ENCODE measurements at regions of chr15 and their contacts with region 1.

Region 1: GRCh38 chr15:33860754-33861153 is 107.5 kb upstream of the CHRM5 start:
- DNase-seq: peak; percentile 82
- ATAC-seq: peak; percentile 98
- H3K4me3 ChIP-seq: no peak overlapping the region
- H3K27ac ChIP-seq: no peak overlapping the region
- H3K4me1 ChIP-seq: peaks cover 19% of the 10 kb centered on the region
- H3K27me3 ChIP-seq: no peaks in the 10 kb centered on the region
- CTCF ChIP-seq: no peak

Region 2: DNA sequence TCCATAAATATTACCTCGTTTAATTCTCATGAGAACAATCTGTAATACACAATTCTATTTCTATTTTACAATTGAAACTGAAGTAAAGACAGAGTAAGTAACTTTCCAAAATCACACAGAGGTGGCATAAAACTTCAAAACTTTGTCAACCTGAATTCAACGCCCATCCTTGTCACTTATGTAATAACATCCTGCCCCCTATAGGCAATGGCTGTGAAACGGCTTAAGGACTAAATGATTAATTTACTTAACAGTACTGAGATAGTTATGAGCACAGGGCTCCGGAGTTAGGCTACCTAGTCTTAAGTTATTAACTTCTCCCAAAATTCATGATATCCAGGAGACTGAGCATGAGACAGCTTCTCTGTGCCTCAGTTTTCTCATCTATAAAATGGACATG is 185.5 kb before region 1 on chr15:
- CTCF ChIA-PET with region 1: no interaction called
- POLR2A ChIA-PET with region 1: no interaction called
- intact Hi-C with region 1: no loop called
- DNase-seq: peak; percentile 68
- ATAC-seq: peak; percentile 56
- H3K4me3 ChIP-seq: no peak overlapping the region
- H3K27ac ChIP-seq: no peak overlapping the region
- H3K4me1 ChIP-seq: no peaks in the 10 kb centered on the region
- H3K27me3 ChIP-seq: peaks cover 86% of the 10 kb centered on the region
- CTCF ChIP-seq: peak; percentile 82

Region 3: GRCh38 chr15:33701305-33701698 is 159.5 kb before region 1 on chr15:
- CTCF ChIA-PET with region 1: no interaction called
- POLR2A ChIA-PET with region 1: no interaction called
- intact Hi-C with region 1: no loop called
- DNase-seq: peak; percentile 26
- ATAC-seq: peak; percentile 60
- H3K4me3 ChIP-seq: no peak overlapping the region
- H3K27ac ChIP-seq: no peak overlapping the region
- H3K4me1 ChIP-seq: no peaks in the 10 kb centered on the region
- H3K27me3 ChIP-seq: peaks cover 26% of the 10 kb centered on the region
- CTCF ChIP-seq: no peak; the same call in 1 of the 2 replicates

Region 4: GRCh38 chr15:33908406-33908805 is 47.7 kb after region 1 on chr15:
- CTCF ChIA-PET with region 1: no interaction called
- POLR2A ChIA-PET with region 1: no interaction called
- intact Hi-C with region 1: loop called (anchors 5 kb)
- DNase-seq: no peak
- ATAC-seq: no peak
- H3K4me3 ChIP-seq: no peak overlapping the region
- H3K27ac ChIP-seq: no peak overlapping the region
- H3K4me1 ChIP-seq: peaks cover 33% of the 10 kb centered on the region
- H3K27me3 ChIP-seq: no peaks in the 10 kb centered on the region
- CTCF ChIP-seq: no peak

Region 5: DNA sequence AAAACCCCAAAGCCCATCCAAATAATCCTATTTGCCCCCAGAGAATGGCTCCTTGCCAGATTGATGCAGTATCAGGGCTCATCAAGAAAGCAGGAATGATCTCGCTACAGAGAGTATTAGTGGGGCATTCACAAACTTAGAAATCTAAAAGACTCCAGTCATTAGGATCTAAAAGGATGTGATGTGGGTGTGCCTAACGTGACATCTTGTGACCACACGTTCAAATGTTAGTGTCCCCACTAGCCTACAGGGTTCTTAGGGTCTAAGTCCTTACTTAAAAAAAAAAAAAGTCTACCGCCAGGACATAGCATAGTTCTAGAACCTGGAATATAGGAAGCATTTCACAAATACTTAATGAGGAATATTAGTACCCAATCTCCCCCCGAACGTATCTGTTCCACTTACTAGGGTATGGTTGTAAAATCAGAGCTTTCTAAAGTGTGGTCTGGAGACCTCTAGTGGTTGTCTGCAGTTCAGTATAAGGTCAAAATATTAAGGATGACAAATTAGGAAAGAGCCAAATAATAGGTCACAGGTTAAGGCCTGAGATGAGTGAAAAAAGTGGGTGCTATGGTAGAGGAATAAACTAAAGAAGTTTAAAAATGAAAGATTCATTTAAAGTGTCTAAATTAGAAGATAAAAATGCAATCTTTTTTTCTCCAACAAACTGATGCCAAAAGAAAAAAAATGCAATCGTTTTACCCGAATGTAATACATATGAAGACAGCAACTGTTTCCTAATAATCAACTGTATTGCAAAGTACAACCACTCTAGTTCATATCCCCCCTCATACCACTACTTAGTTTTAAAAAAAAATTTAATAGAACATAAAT is 103.3 kb after region 1 on chr15:
- CTCF ChIA-PET with region 1: no interaction called
- POLR2A ChIA-PET with region 1: no interaction called
- intact Hi-C with region 1: loop called (anchors 5 kb)
- DNase-seq: peak; percentile 68
- ATAC-seq: peak; percentile 80
- H3K4me3 ChIP-seq: no peak overlapping the region
- H3K27ac ChIP-seq: no peak overlapping the region
- H3K4me1 ChIP-seq: peaks cover 17% of the 10 kb centered on the region
- H3K27me3 ChIP-seq: no peaks in the 10 kb centered on the region
- CTCF ChIP-seq: peak; percentile 93

Measured in PC-3 (cell line).